PC-9 (cell line): ENCODE measurements at regions of chr12 and their contacts with region 1.

Region 1: DNA sequence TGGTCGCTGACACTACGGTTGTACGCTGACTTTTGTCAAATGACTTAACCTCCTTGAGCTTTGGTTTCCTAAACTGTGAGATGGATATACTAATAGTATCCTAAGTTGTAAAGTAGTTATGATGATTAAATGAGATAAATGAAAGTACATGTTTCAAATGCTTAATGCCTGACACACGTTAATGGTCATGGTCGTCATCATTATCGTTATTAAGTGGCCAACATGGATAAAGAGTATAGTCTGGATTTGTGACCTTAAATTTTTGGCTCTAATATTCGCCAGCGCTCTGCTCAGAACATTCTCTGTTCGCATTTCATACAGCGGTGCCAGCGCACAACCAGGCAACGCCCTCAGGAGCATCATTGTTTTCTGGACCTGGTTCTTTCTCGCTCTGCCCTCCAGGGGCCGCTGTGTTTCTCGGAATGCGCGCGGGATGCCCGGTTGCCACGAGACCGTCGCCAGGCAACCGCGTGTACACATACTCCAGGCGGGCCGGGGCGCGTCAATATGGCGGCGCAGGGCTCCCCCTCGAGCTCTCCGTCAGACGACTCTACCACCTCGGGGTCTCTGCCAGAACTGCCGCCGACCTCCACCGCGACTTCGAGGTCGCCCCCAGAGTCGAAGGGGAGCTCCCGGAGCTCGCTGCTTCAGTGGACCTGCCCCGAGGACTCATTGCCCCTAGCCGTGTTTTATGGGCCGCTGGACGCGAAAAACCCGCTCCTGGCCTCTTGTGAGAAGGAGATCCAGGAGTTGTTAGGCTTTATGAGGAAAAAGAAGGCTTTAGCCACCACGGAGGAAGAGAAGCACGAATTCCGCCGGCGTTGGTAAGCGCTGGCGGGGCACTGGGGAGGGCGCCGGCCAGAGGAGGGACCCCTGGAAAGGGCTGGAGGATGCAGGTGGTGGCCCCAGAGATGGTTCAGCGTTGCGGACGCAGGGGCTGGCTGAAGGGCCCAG is at the start of gene CFAP54:
- DNase-seq: peak; percentile 85 to 95
- H3K4me3 ChIP-seq: peak within 1 kb of the TSS; percentile 91
- H3K27ac ChIP-seq: peak within 1 kb of the TSS; percentile 87
- H3K4me1 ChIP-seq: peaks cover 48% of the 10 kb centered on the region
- H3K27me3 ChIP-seq: no peaks in the 10 kb centered on the region
- CTCF ChIP-seq: peak; percentile 87
- total RNA-seq, gene CFAP54: 7.1 and 16.4 TPM in 2 replicates

Region 2: GRCh38 chr12:96194971-96195844 is 294.2 kb before region 1 on chr12:
- CTCF ChIA-PET with region 1: no interaction called
- POLR2A ChIA-PET with region 1: no interaction called
- intact Hi-C with region 1: loop called (anchors 5 kb)
- DNase-seq: peak; percentile 55 to 83
- H3K4me3 ChIP-seq: peak overlapping the region; percentile 100
- H3K27ac ChIP-seq: peak overlapping the region; percentile 99
- H3K4me1 ChIP-seq: peaks cover 28% of the 10 kb centered on the region
- H3K27me3 ChIP-seq: no peaks in the 10 kb centered on the region
- CTCF ChIP-seq: no peak

Region 3: GRCh38 chr12:96335270-96335669 is 154.1 kb before region 1 on chr12:
- CTCF ChIA-PET with region 1: no interaction called
- POLR2A ChIA-PET with region 1: interaction called, 10 read pairs
- intact Hi-C with region 1: no loop called
- DNase-seq: no peak
- H3K4me3 ChIP-seq: no peak overlapping the region
- H3K27ac ChIP-seq: no peak overlapping the region
- H3K4me1 ChIP-seq: no peaks in the 10 kb centered on the region
- H3K27me3 ChIP-seq: no peaks in the 10 kb centered on the region
- CTCF ChIP-seq: no peak

Region 4: GRCh38 chr12:96416033-96416801 is 73.2 kb before region 1 on chr12:
- CTCF ChIA-PET with region 1: no interaction called
- POLR2A ChIA-PET with region 1: no interaction called
- intact Hi-C with region 1: loop called (anchors 5 kb)
- DNase-seq: peak; percentile 14 to 92
- H3K4me3 ChIP-seq: peak overlapping the region; percentile 46; the same call in 1 of the 2 replicates
- H3K27ac ChIP-seq: peak overlapping the region; percentile 99
- H3K4me1 ChIP-seq: peaks cover 45% of the 10 kb centered on the region
- H3K27me3 ChIP-seq: no peaks in the 10 kb centered on the region
- CTCF ChIP-seq: no peak

Region 5: GRCh38 chr12:96445691-96446583 is 43.4 kb before region 1 on chr12:
- CTCF ChIA-PET with region 1: interaction called, 3 read pairs
- POLR2A ChIA-PET with region 1: interaction called, 6 read pairs
- intact Hi-C with region 1: loop called (anchors 2 kb)
- DNase-seq: peak; percentile 40 to 90
- H3K4me3 ChIP-seq: peak overlapping the region; percentile 26; the same call in 1 of the 2 replicates
- H3K27ac ChIP-seq: peak overlapping the region; percentile 90
- H3K4me1 ChIP-seq: peaks cover 40% of the 10 kb centered on the region
- H3K27me3 ChIP-seq: no peaks in the 10 kb centered on the region
- CTCF ChIP-seq: no peak

Region 6: GRCh38 chr12:96501139-96501761 is 11.9 kb after region 1 on chr12:
- CTCF ChIA-PET with region 1: interaction called, 12 read pairs
- POLR2A ChIA-PET with region 1: no interaction called
- intact Hi-C with region 1: loop called (anchors 1 kb)
- DNase-seq: peak; percentile 72 to 85
- H3K4me3 ChIP-seq: peak overlapping the region; percentile 34; the same call in 1 of the 2 replicates
- H3K27ac ChIP-seq: peak overlapping the region; percentile 98
- H3K4me1 ChIP-seq: peaks cover 32% of the 10 kb centered on the region
- H3K27me3 ChIP-seq: no peaks in the 10 kb centered on the region
- CTCF ChIP-seq: no peak

Region 7: DNA sequence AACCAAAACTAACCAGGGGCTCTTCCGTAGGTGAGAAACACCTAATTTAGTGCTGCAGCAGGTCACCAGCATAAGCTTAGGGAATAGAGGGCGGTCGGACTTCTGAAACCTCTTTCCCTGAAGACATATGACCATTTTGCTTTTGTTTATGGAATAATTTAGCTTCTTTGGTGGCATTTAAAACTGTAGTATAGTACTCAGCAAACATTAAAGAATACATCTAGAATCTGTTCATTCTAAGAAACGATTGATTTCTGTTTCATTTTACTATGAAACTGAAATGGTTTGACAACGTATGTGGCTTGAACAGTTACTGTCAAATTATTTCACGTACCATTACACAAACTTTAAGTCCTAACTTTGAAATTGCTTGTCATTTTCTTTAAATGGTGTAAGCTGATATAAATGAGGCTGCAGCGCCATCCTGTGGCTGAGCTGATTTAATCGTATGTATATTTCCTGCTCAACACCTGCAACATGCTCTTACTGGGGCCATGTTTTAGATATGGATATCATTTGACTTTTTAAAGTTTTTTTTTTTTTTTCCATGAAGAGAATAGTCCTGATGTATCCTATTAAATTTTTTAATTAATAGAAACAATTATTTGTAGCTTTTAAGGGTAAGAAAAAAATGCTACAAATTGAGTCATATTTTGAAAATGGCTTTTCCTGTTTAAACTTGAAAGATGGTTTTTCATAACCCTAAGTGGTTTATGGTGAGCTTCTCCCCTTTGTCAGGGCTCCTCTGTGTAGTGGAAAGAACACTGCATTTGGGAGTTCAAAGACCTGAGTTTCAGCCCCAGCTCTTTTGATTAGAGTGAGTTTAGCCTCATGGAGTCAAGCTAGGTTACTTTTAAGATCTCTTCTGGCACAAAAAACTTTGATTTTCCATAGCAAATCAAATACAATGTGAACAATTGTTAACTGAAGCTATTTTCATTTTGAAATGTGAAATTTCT is 27.4 kb after region 1 on chr12:
- CTCF ChIA-PET with region 1: no interaction called
- POLR2A ChIA-PET with region 1: no interaction called
- intact Hi-C with region 1: loop called (anchors 1 kb)
- DNase-seq: peak; percentile 71 to 73
- H3K4me3 ChIP-seq: no peak overlapping the region
- H3K27ac ChIP-seq: 0 out of 2 replicates have a peak overlapping the region, but pooled peaks have one; percentile 13
- H3K4me1 ChIP-seq: peaks cover 5% of the 10 kb centered on the region; the same call in 1 of the 2 replicates
- H3K27me3 ChIP-seq: no peaks in the 10 kb centered on the region
- CTCF ChIP-seq: peak; percentile 89